Endothelial cell of umbilical vein (primary cell): ENCODE measurements at regions of chr11 and their contacts with region 1.

Region 1: GRCh38 chr11:6353367-6353987 is 33.2 kb upstream of the CAVIN3 start:
- DNase-seq: peak; percentile 51
- H3K4me3 ChIP-seq: no peak overlapping the region
- H3K27ac ChIP-seq: no peak overlapping the region
- H3K4me1 ChIP-seq: peaks cover 9% of the 10 kb centered on the region
- H3K27me3 ChIP-seq: peaks cover 4 to 8% of the 10 kb centered on the region in 2 experiments
- CTCF ChIP-seq: peak; percentile 84 to 95
- POLR2A ChIP-seq: no peak

Region 2: GRCh38 chr11:5992604-5993251 is 360.7 kb before region 1 on chr11:
- CTCF ChIA-PET with region 1: interaction called, 29 read pairs
- POLR2A ChIA-PET with region 1: no interaction called
- dilution Hi-C with region 1: no loop called
- intact Hi-C with region 1: no loop called
- DNase-seq: peak; percentile 38
- H3K4me3 ChIP-seq: no peak overlapping the region
- H3K27ac ChIP-seq: no peak overlapping the region
- H3K4me1 ChIP-seq: no peaks in the 10 kb centered on the region
- H3K27me3 ChIP-seq: no peaks in the 10 kb centered on the region
- CTCF ChIP-seq: peak; percentile 49 to 50
- POLR2A ChIP-seq: no peak

Region 3: GRCh38 chr11:6251120-6251733 is 102.2 kb before region 1 on chr11:
- CTCF ChIA-PET with region 1: interaction called, 92 read pairs
- POLR2A ChIA-PET with region 1: no interaction called
- dilution Hi-C with region 1: no loop called
- intact Hi-C with region 1: loop called (anchors 1 kb)
- DNase-seq: peak; percentile 47
- H3K4me3 ChIP-seq: no peak overlapping the region
- H3K27ac ChIP-seq: no peak overlapping the region
- H3K4me1 ChIP-seq: peaks cover 5% of the 10 kb centered on the region
- H3K27me3 ChIP-seq: peaks cover 19 to 28% of the 10 kb centered on the region in 2 experiments
- CTCF ChIP-seq: peak; percentile 76 to 78
- POLR2A ChIP-seq: no peak

Region 4: DNA sequence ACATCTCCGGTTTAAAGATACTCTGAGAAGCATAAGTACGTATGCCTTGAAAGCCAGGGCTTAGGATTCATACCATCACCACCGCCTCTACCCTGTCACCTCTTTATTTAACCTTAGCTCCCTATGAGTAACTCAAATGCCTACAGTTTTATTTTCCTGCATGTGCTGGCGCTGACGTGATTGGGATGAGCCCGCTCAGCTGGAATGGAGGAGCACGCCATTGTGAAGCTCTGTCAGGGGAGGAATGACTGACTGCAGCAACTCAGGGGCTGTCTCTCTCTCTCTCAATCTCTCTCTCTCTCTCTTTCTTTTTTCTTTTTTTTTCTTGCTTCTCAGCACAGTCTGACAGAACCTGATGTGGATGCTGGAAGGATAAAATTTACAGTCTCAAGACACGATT is 45.6 kb before region 1 on chr11:
- CTCF ChIA-PET with region 1: interaction called, 10 read pairs
- POLR2A ChIA-PET with region 1: no interaction called
- dilution Hi-C with region 1: no loop called
- intact Hi-C with region 1: no loop called
- DNase-seq: no peak
- H3K4me3 ChIP-seq: no peak overlapping the region
- H3K27ac ChIP-seq: no peak overlapping the region
- H3K4me1 ChIP-seq: no peaks in the 10 kb centered on the region
- H3K27me3 ChIP-seq: peaks cover 13 to 33% of the 10 kb centered on the region in 2 experiments
- CTCF ChIP-seq: no peak
- POLR2A ChIP-seq: no peak

Region 5: DNA sequence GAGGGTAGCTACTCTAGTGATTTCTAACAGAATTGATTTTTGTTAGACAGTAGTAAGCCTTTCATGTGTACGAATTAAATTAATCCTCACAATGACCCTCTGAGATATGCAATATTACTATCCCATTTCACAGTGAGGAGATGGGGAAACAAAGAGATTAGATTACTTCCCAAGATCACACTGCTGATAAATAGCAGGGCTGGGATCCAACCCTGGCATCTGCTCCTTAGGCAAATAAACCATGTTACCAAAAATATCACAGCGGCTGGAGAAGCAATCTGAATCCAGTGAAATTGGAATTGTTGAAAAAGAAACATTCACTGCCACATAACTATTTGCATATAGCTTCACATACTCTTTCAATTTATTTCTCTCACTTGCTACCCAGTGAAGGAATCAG is 20.4 kb before region 1 on chr11:
- CTCF ChIA-PET with region 1: interaction called, 14 read pairs
- POLR2A ChIA-PET with region 1: interaction called, 3 read pairs
- dilution Hi-C with region 1: no loop called
- intact Hi-C with region 1: no loop called
- DNase-seq: no peak
- H3K4me3 ChIP-seq: no peak overlapping the region
- H3K27ac ChIP-seq: no peak overlapping the region
- H3K4me1 ChIP-seq: peaks cover 5% of the 10 kb centered on the region
- H3K27me3 ChIP-seq: peaks cover 0 to 1% of the 10 kb centered on the region in 2 experiments
- CTCF ChIP-seq: no peak
- POLR2A ChIP-seq: no peak